Mammary epithelial cell (primary cell): ENCODE measurements at regions of chr16 and their contacts with region 1.

Region 1: DNA sequence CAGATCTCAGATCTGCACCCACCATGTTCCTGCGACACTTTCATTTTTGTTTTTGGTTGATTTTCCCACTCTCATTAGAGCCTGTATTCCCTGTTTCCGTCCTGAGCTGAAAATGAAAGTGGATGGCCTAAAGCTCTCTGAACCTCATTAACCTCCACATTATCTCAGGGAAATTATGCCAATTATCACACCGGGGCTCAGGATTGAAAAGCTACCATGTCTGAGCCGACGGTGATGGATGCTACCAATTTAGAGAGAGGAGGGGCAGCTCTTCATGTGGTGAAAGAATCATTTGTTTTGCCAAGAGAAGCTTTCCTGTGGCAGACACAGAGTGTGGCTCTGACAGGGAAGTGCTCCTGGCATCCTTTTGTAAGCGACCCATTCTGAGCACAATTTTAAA is 410.4 kb upstream of the CDH11 start:
- DNase-seq: no peak
- H3K4me3 ChIP-seq: no peak overlapping the region
- H3K27ac ChIP-seq: no peak overlapping the region
- H3K4me1 ChIP-seq: peaks cover 14% of the 10 kb centered on the region
- H3K27me3 ChIP-seq: no peaks in the 10 kb centered on the region
- CTCF ChIP-seq: no peak

Region 2: DNA sequence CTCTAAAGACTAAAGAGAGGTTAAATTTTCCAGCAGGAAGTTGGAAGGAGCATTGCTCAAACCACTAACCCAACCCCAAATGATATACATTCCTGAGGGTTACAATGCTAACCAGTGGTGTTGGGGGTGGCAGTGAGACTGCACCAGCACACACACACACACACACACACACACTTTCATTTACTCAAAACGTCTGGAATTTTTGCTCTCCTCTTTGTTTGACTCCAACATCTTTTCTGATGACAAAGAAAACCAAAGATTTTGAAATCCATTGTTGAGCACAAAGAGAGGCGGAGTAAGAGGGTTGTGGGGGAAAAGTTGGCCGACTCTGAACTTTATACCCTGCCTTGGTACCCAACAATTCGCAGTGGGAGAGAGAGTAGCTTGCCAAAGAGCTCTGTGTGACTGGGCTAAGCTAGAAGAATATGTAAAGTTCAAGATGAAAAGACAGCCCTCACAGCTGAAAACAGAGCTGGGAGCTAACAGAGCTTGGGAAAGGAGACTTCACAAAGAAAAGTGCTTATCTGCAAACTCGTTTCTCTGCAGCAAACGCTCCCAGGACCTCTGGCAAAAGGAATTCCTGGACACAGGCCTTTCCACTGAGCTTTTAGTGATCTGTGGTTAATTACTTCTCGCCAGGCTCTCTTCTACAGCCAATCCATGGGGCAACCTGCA is 15.7 kb after region 1 on chr16:
- CTCF ChIA-PET with region 1: no interaction called
- dilution Hi-C with region 1: no loop called
- in situ Hi-C with region 1: no loop called
- intact Hi-C with region 1: loop called (anchors 2 kb)
- DNase-seq: peak; percentile 77
- H3K4me3 ChIP-seq: no peak overlapping the region
- H3K27ac ChIP-seq: peak overlapping the region; percentile 6
- H3K4me1 ChIP-seq: peaks cover 29% of the 10 kb centered on the region
- H3K27me3 ChIP-seq: no peaks in the 10 kb centered on the region
- CTCF ChIP-seq: no peak